ENCODE measurements at regions of chr5 and their contacts with region 1.

Region 1: GRCh38 chr5:95961617-95962474 is at the start of gene ELL2:
- DNase-seq: peak; percentile 99
- H3K4me3 Mint-ChIP-seq: peak within 1 kb of the TSS; percentile 98
- H3K27ac Mint-ChIP-seq: peak within 1 kb of the TSS; percentile 98
- H3K4me1 Mint-ChIP-seq: peaks cover 62% of the 10 kb centered on the region
- H3K27me3 Mint-ChIP-seq: no peaks in the 10 kb centered on the region
- total RNA-seq, gene ELL2: 127 to 132 TPM

Region 2: GRCh38 chr5:95554647-95555548 is 406.9 kb before region 1 on chr5 and contains the starts of genes ARSK and SKIC3:
- CTCF ChIA-PET with region 1: no interaction called
- POLR2A ChIA-PET with region 1: no interaction called
- intact Hi-C with region 1: loop called (anchors 2 kb)
- DNase-seq: peak; percentile 95
- H3K4me3 Mint-ChIP-seq: peak within 1 kb of the TSS; percentile 89
- H3K27ac Mint-ChIP-seq: peak within 1 kb of the TSS; percentile 92
- H3K4me1 Mint-ChIP-seq: peaks cover 42% of the 10 kb centered on the region
- H3K27me3 Mint-ChIP-seq: no peaks in the 10 kb centered on the region
- total RNA-seq, gene ARSK: 4.5 to 4.6 TPM
- total RNA-seq, gene SKIC3: 74.7 to 78.1 TPM

Region 3: DNA sequence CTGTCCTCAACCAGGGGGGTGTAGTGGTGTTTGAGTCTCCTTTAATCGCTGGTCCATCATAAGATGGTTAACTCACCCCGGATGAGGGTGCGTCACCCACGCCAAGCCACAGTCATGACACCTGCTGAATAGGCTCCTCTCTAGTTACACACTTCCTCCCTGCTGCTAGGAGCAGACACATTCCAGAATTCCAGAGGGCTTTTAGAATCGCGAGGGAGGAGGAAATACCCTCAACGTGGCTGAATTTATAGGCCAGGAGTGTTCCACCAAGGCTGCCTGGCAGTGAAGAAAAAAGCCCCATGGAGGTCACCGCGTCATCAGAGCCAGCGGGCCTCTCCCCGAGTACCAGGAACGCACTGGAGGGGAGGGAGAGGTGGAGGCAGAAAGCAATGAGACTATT is 144.4 kb before region 1 on chr5:
- CTCF ChIA-PET with region 1: no interaction called
- POLR2A ChIA-PET with region 1: no interaction called
- intact Hi-C with region 1: no loop called
- DNase-seq: peak; percentile 67
- H3K4me3 Mint-ChIP-seq: peak overlapping the region; percentile 70
- H3K27ac Mint-ChIP-seq: peak overlapping the region; percentile 82
- H3K4me1 Mint-ChIP-seq: peaks cover 69% of the 10 kb centered on the region
- H3K27me3 Mint-ChIP-seq: no peaks in the 10 kb centered on the region

Region 4: GRCh38 chr5:95870105-95870672 is 91.7 kb before region 1 on chr5:
- CTCF ChIA-PET with region 1: interaction called, 9 read pairs
- POLR2A ChIA-PET with region 1: interaction called, 3 read pairs
- intact Hi-C with region 1: loop called (anchors 1 kb)
- DNase-seq: peak; percentile 71
- H3K4me3 Mint-ChIP-seq: peak overlapping the region; percentile 54
- H3K27ac Mint-ChIP-seq: peak overlapping the region; percentile 98
- H3K4me1 Mint-ChIP-seq: peaks cover 58% of the 10 kb centered on the region
- H3K27me3 Mint-ChIP-seq: no peaks in the 10 kb centered on the region

Region 5: DNA sequence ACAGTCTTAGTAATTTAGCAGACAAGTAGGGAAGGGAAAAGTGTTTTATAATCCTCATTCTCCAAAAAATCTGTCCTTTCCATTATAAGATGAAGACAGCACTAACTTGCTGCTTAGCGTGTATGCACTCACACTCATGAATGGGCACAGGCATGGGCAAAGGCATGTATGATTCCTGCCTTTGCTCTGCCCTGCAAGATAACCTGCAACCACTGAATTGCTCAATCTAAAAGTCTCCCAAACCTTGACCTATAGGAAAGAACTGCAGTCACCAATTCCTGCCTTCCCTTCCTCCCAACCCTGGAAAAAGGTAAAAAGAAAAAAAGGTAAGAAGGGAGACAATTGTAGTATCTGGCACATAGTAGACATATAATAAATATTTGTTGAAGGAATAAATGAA is 41.0 kb before region 1 on chr5:
- CTCF ChIA-PET with region 1: no interaction called
- POLR2A ChIA-PET with region 1: no interaction called
- intact Hi-C with region 1: no loop called
- DNase-seq: no peak
- H3K4me3 Mint-ChIP-seq: no peak overlapping the region
- H3K27ac Mint-ChIP-seq: no peak overlapping the region
- H3K4me1 Mint-ChIP-seq: peaks cover 10% of the 10 kb centered on the region
- H3K27me3 Mint-ChIP-seq: no peaks in the 10 kb centered on the region

Region 6: GRCh38 chr5:96079075-96079474 is 117.2 kb after region 1 on chr5:
- CTCF ChIA-PET with region 1: interaction called, 7 read pairs
- POLR2A ChIA-PET with region 1: interaction called, 7 read pairs
- intact Hi-C with region 1: loop called (anchors 1 kb)
- DNase-seq: peak; percentile 67
- H3K4me3 Mint-ChIP-seq: no peak overlapping the region
- H3K27ac Mint-ChIP-seq: peak overlapping the region; percentile 89
- H3K4me1 Mint-ChIP-seq: peaks cover 45% of the 10 kb centered on the region
- H3K27me3 Mint-ChIP-seq: peaks cover 5% of the 10 kb centered on the region

Region 7: DNA sequence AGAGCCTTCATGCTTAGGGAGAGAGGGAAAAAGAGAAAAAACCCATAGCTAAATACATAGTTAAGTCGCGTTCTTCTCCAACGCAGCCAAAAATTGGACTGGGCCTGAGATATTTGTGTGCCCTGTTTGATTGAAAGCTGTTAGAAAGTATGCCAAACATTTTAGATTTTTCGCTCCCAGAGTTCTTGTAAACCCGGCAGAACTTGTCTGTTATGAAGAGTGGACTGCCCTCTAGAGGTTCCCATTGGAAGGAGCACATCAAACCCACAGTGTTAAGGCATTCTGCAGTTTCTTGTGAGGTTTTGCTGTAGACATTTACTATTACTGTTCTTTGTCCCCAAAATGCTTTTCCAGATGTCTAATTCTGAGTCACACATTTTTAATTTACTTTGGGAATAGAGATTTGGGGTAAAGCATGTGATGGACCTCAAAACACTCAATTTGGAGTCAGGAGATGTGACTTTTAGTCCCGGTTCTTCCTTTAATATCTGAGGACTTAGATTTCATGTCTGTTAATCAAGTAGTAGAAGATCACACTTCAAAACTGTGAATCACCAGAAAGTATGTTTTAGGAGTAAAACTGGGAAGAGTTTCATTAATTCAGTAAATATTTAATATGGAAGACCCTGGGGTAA is 374.6 kb after region 1 on chr5:
- CTCF ChIA-PET with region 1: interaction called, 46 read pairs
- POLR2A ChIA-PET with region 1: no interaction called
- intact Hi-C with region 1: loop called (anchors 1 kb)
- DNase-seq: peak; percentile 67
- H3K4me3 Mint-ChIP-seq: no peak overlapping the region
- H3K27ac Mint-ChIP-seq: no peak overlapping the region
- H3K4me1 Mint-ChIP-seq: peaks cover 11% of the 10 kb centered on the region
- H3K27me3 Mint-ChIP-seq: peaks cover 19% of the 10 kb centered on the region

Region 8: GRCh38 chr5:96816411-96816939 is 854.6 kb after region 1 on chr5:
- CTCF ChIA-PET with region 1: no interaction called
- POLR2A ChIA-PET with region 1: no interaction called
- intact Hi-C with region 1: loop called (anchors 10 kb)
- DNase-seq: peak; percentile 70
- H3K4me3 Mint-ChIP-seq: peak overlapping the region; percentile 78
- H3K27ac Mint-ChIP-seq: peak overlapping the region; percentile 93
- H3K4me1 Mint-ChIP-seq: peaks cover 64% of the 10 kb centered on the region
- H3K27me3 Mint-ChIP-seq: no peaks in the 10 kb centered on the region

Measured in activated CD4-positive, alpha-beta memory T cell treated with anti-CD3 and anti-CD28 coated beads for 36 hours (primary cell).